ENCODE measurements at regions of chr1 and their contacts with region 1.

Region 1: GRCh38 chr1:77779529-77780281 is at the start of gene MIGA1:
- DNase-seq: peak; percentile 90 to 99 (median 94)

Region 2: GRCh38 chr1:77759071-77760028 is 20.4 kb before region 1 on chr1 and contains the start of gene USP33:
- intact Hi-C with region 1: loop called (anchors 1 kb)
- DNase-seq: peak; percentile 76 to 98 (median 89)

Region 3: DNA sequence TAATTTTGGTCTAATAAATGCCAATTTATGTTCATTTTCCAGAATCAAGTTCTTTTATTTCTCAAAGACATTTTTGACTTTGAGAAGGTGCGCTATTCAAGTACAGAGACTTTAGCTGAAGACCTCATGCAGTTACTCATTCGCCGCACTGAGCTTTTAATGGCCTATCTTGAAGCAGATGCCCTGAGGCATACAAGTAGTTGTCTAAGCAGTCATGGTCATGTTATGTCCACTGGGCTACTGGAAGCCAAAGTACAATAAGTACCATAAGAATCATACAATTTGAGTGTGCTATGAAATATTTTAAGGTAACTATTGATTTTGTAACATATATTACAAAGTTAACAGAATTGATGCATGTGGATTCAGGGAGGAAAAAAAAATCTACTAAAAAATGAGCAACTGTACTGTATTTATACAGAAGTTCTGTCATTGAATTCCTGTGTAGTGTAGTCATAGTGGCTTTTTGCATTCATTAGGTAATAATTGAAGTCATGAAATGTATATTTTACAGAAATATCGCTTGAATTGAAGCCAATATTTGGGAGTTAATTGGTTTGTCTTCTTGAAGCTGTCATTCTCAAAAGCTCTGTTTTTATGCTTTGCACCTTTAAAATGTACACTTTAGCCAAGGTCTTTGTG is 95.2 kb after region 1 on chr1:
- intact Hi-C with region 1: no loop called
- DNase-seq: no peak

Measured in posterior cingulate gyrus (tissue), 11 donors.